GM10248 (cell line): ENCODE measurements at regions of chr17 and their contacts with region 1.

Region 1: GRCh38 chr17:63675607-63676413 is 24.1 kb downstream of the LIMD2 start:
- DNase-seq: no peak
- CTCF ChIP-seq: no peak

Region 2: DNA sequence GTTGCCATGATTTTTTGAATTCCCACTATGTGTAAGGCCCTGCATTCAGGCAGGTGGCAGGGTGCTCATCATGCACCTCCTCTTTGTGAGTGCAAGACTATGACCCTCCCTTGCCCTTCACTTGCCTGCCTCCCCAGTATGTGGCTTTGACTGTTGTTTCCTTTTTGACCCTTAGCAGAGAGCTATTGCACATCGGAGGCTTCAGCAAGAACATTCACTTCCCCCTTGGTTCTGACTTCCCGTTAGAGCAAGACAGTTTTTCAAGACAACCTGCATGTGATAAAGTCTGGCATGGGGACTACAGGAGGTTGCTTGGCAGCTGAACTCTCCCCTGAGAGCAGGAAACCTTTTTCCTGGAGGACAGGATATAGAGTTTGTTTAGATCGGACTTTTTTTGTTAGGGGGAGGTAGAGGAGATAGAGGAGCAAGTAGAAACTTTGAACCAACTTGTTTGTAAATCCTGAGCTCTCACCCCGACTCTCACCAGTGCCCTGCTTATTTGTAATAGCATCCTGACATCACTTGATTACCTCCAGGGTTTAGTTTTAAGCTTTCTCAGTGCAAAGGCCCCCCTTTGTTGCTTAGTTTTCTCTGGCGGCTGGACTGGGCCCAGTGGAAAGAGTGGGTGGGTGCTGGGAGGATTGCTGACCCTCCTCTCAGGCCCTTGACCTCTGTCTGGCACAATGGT is 10.1 kb before region 1 on chr17:
- CTCF ChIA-PET with region 1: interaction called, 17 read pairs
- POLR2A ChIA-PET with region 1: no interaction called
- DNase-seq: peak; percentile 50
- CTCF ChIP-seq: no peak